MCF 10A (cell line): ENCODE measurements at regions of chr5 and their contacts with region 1.

Region 1: GRCh38 chr5:135386886-135387628 is 12.0 kb downstream of the MACROH2A1 start:
- DNase-seq: peak; percentile 100
- H3K4me3 Mint-ChIP-seq: peak overlapping the region; percentile 46
- H3K27ac Mint-ChIP-seq: peak overlapping the region; percentile 89
- H3K4me1 Mint-ChIP-seq: peaks cover 56% of the 10 kb centered on the region
- H3K27me3 Mint-ChIP-seq: no peaks in the 10 kb centered on the region
- CTCF ChIP-seq: no peak

Region 2: GRCh38 chr5:135364421-135365262 is 22.4 kb before region 1 on chr5:
- CTCF ChIA-PET with region 1: interaction called, 3 read pairs
- POLR2A ChIA-PET with region 1: interaction called, 10 read pairs
- intact Hi-C with region 1: no loop called
- DNase-seq: no peak
- H3K4me3 Mint-ChIP-seq: no peak overlapping the region
- H3K27ac Mint-ChIP-seq: peak overlapping the region; percentile 61
- H3K4me1 Mint-ChIP-seq: peaks cover 5% of the 10 kb centered on the region
- H3K27me3 Mint-ChIP-seq: no peaks in the 10 kb centered on the region
- CTCF ChIP-seq: no peak

Region 3: GRCh38 chr5:135398853-135399523 is 11.9 kb after region 1 on chr5 and contains the start of gene MACROH2A1:
- CTCF ChIA-PET with region 1: interaction called, 7 read pairs
- POLR2A ChIA-PET with region 1: interaction called, 82 read pairs
- intact Hi-C with region 1: no loop called
- DNase-seq: peak; percentile 91
- H3K4me3 Mint-ChIP-seq: peak within 1 kb of the TSS; percentile 83
- H3K27ac Mint-ChIP-seq: peak within 1 kb of the TSS; percentile 92
- H3K4me1 Mint-ChIP-seq: peaks cover 39% of the 10 kb centered on the region
- H3K27me3 Mint-ChIP-seq: no peaks in the 10 kb centered on the region
- CTCF ChIP-seq: no peak
- total RNA-seq, gene MACROH2A1: 266 and 306 TPM in 2 replicates

Region 4: GRCh38 chr5:135482381-135482933 is 95.4 kb after region 1 on chr5:
- CTCF ChIA-PET with region 1: no interaction called
- POLR2A ChIA-PET with region 1: no interaction called
- intact Hi-C with region 1: no loop called
- DNase-seq: no peak
- H3K4me3 Mint-ChIP-seq: no peak overlapping the region
- H3K27ac Mint-ChIP-seq: no peak overlapping the region
- H3K4me1 Mint-ChIP-seq: peaks cover 3% of the 10 kb centered on the region
- H3K27me3 Mint-ChIP-seq: no peaks in the 10 kb centered on the region
- CTCF ChIP-seq: no peak

Region 5: DNA sequence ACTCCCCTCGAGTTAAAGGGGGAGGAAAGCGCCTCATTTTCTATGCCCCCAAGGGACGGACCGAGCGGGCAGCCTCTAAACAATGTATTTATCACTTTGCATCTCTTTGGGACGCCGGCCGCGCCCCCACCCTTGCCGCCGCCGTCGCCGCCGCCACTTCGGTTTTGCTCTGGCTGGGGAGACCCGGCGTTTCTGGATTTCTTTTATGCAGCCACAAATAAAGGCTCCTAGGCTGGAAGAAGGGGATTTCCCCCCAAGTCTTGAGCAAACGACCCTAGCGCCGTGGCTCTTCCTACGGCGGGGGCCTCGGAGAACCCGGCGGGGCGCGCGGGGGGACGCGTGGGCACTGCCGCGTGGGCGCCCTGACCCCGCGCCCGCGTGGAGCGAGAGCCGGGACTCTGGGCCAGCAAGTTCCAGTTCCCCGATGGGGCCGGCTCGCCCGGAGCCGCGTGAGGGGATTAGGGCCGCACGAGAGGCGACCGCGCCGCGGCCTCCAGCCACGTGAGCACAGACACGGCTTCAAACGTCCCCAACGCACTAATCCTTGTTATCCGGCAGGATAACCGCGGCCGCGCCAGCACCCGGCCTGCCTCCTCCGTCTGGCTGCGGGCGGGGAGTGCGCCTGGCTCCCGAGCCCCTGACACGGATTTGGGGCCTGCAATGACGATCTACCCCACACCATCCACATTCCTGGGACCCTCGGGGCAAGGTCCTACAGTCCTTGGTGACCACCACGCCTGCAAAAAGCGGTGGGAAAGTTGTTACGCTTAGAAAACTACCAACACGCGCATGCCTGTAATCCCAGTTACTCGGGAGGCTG is 156.6 kb after region 1 on chr5:
- CTCF ChIA-PET with region 1: no interaction called
- POLR2A ChIA-PET with region 1: no interaction called
- intact Hi-C with region 1: no loop called
- DNase-seq: no peak
- H3K4me3 Mint-ChIP-seq: no peak overlapping the region
- H3K27ac Mint-ChIP-seq: no peak overlapping the region
- H3K4me1 Mint-ChIP-seq: no peaks in the 10 kb centered on the region
- H3K27me3 Mint-ChIP-seq: no peaks in the 10 kb centered on the region
- CTCF ChIP-seq: no peak